SK-N-SH (cell line): ENCODE measurements at regions of chr20 and their contacts with region 1.

Region 1: GRCh38 chr20:45322952-45323383 is 14.9 kb upstream of the MATN4 start:
- DNase-seq: no peak
- H3K4me3 ChIP-seq: no peak overlapping the region
- H3K27ac ChIP-seq: no peak overlapping the region
- H3K4me1 ChIP-seq: peaks cover 0 to 8% of the 10 kb centered on the region in 2 experiments; a peak in 1 of 4 replicates
- H3K27me3 ChIP-seq: no peaks in the 10 kb centered on the region
- CTCF ChIP-seq: peak; percentile 31; the same call in 1 of the 2 replicates
- EP300 ChIP-seq: no peak
- RAD21 ChIP-seq: peak; percentile 65

Region 2: GRCh38 chr20:44990425-44990824 is 332.5 kb before region 1 on chr20:
- CTCF ChIA-PET with region 1: no interaction called
- POLR2A ChIA-PET with region 1: no interaction called
- DNase-seq: no peak
- H3K4me3 ChIP-seq: peak overlapping the region in 1 of 2 experiments; percentile 19; a peak in 1 of 4 replicates
- H3K27ac ChIP-seq: no peak overlapping the region
- H3K4me1 ChIP-seq: peaks cover 3 to 13% of the 10 kb centered on the region in 2 experiments; a peak in 3 of 4 replicates
- H3K27me3 ChIP-seq: no peaks in the 10 kb centered on the region
- CTCF ChIP-seq: no peak
- EP300 ChIP-seq: no peak
- RAD21 ChIP-seq: no peak

Region 3: DNA sequence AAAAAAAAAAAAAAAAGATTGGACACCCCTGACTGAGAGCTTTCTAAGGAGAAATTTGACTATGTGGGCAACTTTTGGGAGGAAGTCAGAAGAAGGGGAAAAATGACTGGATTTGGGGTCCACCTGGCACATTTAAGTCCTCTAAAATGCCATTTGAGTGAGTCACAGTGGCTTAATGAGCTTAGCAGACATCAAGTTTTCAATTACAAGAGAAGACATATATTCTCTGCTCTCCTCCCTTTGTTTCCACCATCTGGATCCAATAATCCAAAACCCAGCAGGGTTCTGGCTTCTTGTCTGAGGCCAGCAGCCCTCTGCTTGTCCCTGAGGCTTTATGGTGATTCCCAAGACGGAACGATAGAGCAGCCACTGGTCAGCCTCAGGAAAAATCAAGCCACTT is 141.3 kb before region 1 on chr20:
- CTCF ChIA-PET with region 1: no interaction called
- POLR2A ChIA-PET with region 1: no interaction called
- DNase-seq: peak; percentile 17
- H3K4me3 ChIP-seq: no peak overlapping the region
- H3K27ac ChIP-seq: no peak overlapping the region
- H3K4me1 ChIP-seq: peaks cover 0 to 4% of the 10 kb centered on the region in 2 experiments; a peak in 2 of 4 replicates
- H3K27me3 ChIP-seq: no peaks in the 10 kb centered on the region
- CTCF ChIP-seq: no peak
- EP300 ChIP-seq: 0 out of 4 replicates have a peak, but pooled peaks of 1 of the 2 experiments have one; percentile 16
- RAD21 ChIP-seq: no peak

Region 4: GRCh38 chr20:45300961-45301360 is 22.0 kb before region 1 on chr20:
- CTCF ChIA-PET with region 1: interaction called, 17 read pairs
- POLR2A ChIA-PET with region 1: no interaction called
- DNase-seq: peak; percentile 79
- H3K4me3 ChIP-seq: no peak overlapping the region
- H3K27ac ChIP-seq: no peak overlapping the region
- H3K4me1 ChIP-seq: no peaks in the 10 kb centered on the region; a peak in 2 of 4 replicates
- H3K27me3 ChIP-seq: no peaks in the 10 kb centered on the region; the same call in 1 of the 2 replicates
- CTCF ChIP-seq: peak; percentile 52
- EP300 ChIP-seq: no peak
- RAD21 ChIP-seq: no peak

Region 5: DNA sequence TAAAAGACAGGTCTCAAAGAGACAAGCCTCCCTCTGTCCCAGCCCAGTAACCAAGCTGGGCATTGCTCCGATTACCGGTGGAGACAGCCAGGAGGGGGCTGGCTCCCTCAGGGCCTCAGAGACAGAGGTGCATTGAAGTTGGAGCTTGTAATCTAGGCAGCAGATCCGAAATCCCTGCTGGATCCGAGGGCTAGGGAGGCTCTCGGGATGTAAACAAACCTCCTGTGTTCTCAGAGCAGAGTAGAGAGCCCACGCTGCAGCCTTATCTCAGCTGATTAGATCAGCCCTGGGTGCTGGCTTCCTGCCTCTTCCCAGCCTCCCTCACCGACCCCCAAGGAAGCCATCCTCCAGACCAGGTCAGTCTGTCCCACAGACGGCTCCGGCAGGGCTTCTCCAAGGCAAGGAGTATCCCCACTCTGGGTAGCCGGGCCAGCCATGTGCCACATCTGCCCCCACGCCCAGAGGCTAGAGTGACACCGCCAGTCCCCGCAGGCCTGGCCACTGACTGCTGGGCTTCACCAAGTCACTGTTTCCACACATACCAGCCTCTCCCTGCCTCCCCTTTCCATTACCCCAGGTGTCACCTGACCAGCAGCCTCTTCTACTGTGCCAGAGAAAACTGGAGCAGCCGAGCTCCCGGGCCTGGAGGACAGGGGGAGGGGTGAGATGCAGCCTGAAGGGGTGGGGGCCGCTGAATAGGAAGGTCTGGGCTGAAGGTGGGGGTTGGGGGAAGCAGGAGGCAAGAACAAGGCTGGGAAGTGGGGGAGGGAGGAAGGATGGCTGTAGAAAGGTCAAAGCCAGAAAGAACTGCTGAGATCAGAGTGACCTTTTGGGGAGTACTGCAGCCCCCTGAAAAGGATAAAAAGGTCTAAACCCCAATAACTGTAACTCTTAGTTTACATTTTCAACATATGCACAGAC is 19.2 kb after region 1 on chr20:
- CTCF ChIA-PET with region 1: interaction called, 20 read pairs
- POLR2A ChIA-PET with region 1: interaction called, 3 read pairs
- DNase-seq: peak; percentile 79
- H3K4me3 ChIP-seq: peak overlapping the region; percentile 27 to 31
- H3K27ac ChIP-seq: peak overlapping the region; percentile 90 to 96
- H3K4me1 ChIP-seq: peaks cover 72 to 74% of the 10 kb centered on the region in 2 experiments
- H3K27me3 ChIP-seq: no peaks in the 10 kb centered on the region
- CTCF ChIP-seq: no peak
- EP300 ChIP-seq: peak in 1 of 2 experiments; percentile 45; a peak in 1 of 4 replicates
- RAD21 ChIP-seq: no peak

Region 6: DNA sequence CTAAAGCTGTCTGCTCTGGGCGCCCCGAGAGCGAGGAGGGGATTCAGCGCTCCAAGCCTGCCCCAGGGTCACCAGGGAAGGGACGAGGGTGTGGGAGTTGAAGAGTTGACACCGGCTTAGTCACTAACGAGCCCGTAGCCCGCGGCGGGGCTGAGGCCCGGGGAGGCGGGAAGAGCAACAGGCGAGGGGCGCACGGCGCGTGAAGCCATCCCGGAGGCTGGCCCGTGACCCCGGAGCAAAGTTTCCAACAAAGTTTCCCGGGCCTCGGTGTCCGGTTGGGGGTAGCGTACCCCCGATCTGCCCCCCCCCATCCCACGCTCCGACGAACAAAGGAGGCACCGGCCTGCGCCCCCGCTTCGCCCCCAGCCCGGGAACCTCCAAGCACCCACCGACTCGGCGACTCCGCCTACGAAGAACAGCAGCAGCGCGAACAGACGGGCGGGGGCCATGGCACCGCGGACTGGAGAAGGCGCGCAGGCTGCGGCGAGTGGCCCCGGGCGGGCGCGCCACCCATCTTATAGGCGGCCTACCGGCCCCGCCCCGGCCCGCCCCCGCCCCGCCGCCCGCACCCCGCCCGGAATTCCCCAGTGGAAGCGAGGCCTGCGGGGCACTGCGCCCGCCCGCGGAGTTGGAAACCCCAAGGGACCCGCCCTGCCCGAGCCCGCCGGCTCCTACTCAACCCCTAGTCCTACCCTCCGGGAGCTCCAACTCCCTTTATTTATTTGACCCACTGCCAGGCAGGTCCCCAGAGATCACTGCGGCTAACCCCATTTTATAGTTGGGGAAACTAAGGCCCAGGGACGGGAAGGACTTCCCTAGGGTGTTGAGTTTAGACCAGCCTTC is 25.2 kb after region 1 on chr20 and contains the start of gene SDC4:
- CTCF ChIA-PET with region 1: interaction called, 13 read pairs
- POLR2A ChIA-PET with region 1: no interaction called
- DNase-seq: peak; percentile 85
- H3K4me3 ChIP-seq: peak within 1 kb of the TSS; percentile 72 to 87
- H3K27ac ChIP-seq: peak within 1 kb of the TSS; percentile 40 to 60; a peak in 3 of 4 replicates
- H3K4me1 ChIP-seq: peaks cover 40 to 43% of the 10 kb centered on the region in 2 experiments
- H3K27me3 ChIP-seq: no peaks in the 10 kb centered on the region
- CTCF ChIP-seq: no peak
- EP300 ChIP-seq: no peak
- RAD21 ChIP-seq: no peak
- polyA plus RNA-seq, gene SDC4: 131 and 192 TPM in 2 replicates

Region 7: DNA sequence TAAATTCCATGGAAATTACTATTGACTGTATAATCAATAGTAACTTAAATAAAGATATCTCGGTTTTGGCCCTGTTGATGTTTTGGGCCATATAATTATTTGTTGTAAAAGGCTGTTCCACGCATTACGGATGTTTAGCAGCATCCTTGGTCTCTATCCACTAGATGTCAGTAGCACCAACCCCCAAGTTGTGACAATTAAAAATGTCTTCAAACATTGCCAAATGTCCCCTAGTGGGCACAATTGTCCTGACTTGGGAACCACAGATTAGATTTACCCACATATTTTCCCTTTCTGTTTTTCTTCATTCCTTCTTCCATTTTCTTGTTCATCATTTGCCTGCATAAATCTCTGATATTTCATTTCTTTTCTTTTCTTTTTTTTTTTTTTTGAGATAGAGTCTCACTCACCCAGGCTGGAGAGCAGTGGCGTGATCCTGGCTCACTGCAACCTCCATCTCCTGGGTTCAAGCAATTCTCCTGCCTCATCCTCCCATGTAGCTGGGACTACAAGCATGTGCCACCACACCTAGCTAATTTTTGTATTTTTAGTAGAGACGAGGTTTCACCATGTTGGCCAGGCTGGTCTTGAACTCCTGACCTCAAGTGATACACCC is 269.7 kb after region 1 on chr20:
- CTCF ChIA-PET with region 1: no interaction called
- POLR2A ChIA-PET with region 1: no interaction called
- DNase-seq: peak; percentile 33
- H3K4me3 ChIP-seq: no peak overlapping the region; a peak in 1 of 4 replicates
- H3K27ac ChIP-seq: no peak overlapping the region
- H3K4me1 ChIP-seq: no peaks in the 10 kb centered on the region
- H3K27me3 ChIP-seq: peaks cover 10% of the 10 kb centered on the region; the same call in 1 of the 2 replicates
- CTCF ChIP-seq: peak; percentile 75
- EP300 ChIP-seq: no peak
- RAD21 ChIP-seq: peak; percentile 60